Gastrocnemius medialis (tissue), 4 donors: ENCODE measurements at regions of chr1 and their contacts with region 1.

Region 1: GRCh38 chr1:151459331-151460046 is at the start of gene POGZ:
- DNase-seq: peak; percentile 91 to 95
- ATAC-seq: peak; percentile 82 to 83
- H3K4me3 ChIP-seq: peak within 1 kb of the TSS; percentile 76 to 97 (median 84)
- H3K27ac ChIP-seq: peak within 1 kb of the TSS; percentile 87 to 98 (median 96)
- H3K4me1 ChIP-seq: peaks cover 11 to 16% of the 10 kb centered on the region in 2 donors
- H3K27me3 ChIP-seq: peaks cover 0 to 2% (median 0%) of the 10 kb centered on the region in 3 donors
- CTCF ChIP-seq: no peak
- POLR2A ChIP-seq: peak; percentile 37 to 39
- total RNA-seq, gene POGZ: 14.1 to 20.2 (median 15.1) TPM

Region 2: DNA sequence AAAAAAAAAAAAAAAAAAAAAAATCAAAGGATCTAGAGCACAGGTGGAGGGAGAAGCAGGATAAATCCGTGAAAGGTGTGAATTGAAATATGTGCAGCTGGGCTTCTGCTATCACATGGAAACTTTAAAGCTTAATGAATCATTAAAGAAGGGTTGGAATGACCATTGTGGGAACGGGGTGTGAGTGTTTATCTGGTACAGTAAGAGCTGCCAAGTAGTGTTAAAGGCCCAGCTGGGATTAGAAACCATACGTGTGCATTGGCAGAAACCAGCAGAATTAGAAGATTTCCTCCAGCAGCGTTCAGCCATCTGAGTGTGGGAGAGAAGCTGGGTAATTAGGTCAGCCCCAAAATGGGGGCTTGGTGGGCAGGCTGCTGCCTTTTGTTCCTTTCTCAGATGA is 930.5 kb before region 1 on chr1:
- in situ Hi-C with region 1: no loop called
- intact Hi-C with region 1: no loop called
- DNase-seq: no peak
- ATAC-seq: peak in 1 of 2 donors; percentile 70
- H3K4me3 ChIP-seq: no peak overlapping the region
- H3K27ac ChIP-seq: peak overlapping the region in 1 of 4 donors; percentile 3
- H3K4me1 ChIP-seq: peaks cover 9 to 12% of the 10 kb centered on the region in 2 donors
- H3K27me3 ChIP-seq: no peaks in the 10 kb centered on the region
- CTCF ChIP-seq: no peak
- POLR2A ChIP-seq: no peak

Region 3: GRCh38 chr1:151472856-151473731 is 13.6 kb after region 1 on chr1:
- in situ Hi-C with region 1: no loop called
- intact Hi-C with region 1: loop called (anchors 1 kb)
- DNase-seq: no peak
- ATAC-seq: peak in 1 of 2 donors; percentile 61
- H3K4me3 ChIP-seq: peak overlapping the region; percentile 67 to 79 (median 73)
- H3K27ac ChIP-seq: peak overlapping the region; percentile 28 to 70 (median 64)
- H3K4me1 ChIP-seq: no peaks in the 10 kb centered on the region
- H3K27me3 ChIP-seq: no peaks in the 10 kb centered on the region
- CTCF ChIP-seq: no peak
- POLR2A ChIP-seq: no peak

Region 4: DNA sequence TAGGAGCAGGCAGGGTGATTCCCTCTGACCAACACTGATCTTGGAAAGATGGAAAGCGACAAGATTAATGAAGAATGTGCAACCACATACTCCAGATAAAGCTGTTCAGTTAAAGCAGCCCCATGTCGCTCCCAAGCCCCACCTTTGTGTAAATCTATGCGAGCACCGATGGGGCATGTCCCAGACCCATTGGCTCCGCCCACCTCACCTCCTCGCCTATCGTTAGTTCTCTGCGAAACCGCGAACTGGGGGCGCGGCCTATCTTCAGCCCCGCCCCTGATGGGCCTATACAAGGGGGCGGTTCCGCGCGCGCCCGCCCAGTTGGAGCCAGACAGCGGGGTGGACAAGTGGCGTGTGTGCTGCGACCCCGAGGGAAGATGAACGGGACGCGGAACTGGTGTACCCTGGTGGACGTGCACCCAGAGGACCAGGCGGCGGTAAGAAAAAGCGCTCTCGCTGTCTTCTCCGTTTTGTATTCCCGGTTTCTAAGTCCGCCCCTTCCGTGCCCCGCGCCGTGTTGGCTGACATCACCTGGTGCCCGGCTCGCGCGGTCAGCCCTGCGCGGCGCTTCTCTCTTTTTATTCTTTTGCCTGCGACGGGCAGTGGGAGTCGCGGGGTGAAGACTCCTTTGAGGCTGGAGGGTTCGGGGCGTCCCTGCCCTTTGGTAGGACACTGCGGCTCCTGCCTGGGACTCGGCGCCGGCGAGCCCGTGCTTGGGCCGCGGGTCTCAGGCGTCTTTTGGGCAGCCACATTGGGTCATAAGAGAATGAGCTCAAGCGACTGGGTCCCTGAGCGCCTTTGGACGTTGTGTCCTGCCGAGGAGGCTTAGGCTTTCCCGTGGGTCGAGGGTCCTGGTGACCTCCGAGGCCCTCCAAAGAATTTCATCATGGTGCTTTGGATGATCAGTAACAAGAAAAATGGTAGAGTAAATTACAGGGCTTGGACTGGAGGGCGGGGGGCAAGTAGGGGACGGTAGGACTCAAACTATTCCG is 80.8 kb after region 1 on chr1 and contains the start of gene TUFT1:
- in situ Hi-C with region 1: loop called in 1 of 4 experiments (anchors 10 kb)
- intact Hi-C with region 1: no loop called
- DNase-seq: peak; percentile 86 to 89
- ATAC-seq: peak; percentile 94 to 96
- H3K4me3 ChIP-seq: peak within 1 kb of the TSS; percentile 65 to 84 (median 72)
- H3K27ac ChIP-seq: peak within 1 kb of the TSS; percentile 61 to 76 (median 72)
- H3K4me1 ChIP-seq: peaks cover 4 to 19% of the 10 kb centered on the region in 2 donors
- H3K27me3 ChIP-seq: no peaks in the 10 kb centered on the region
- CTCF ChIP-seq: no peak
- POLR2A ChIP-seq: peak; percentile 86 to 96
- total RNA-seq, gene TUFT1: 1.2 to 4.0 (median 2.7) TPM